ENCODE measurements at regions of chr5 and their contacts with region 1.

Region 1: GRCh38 chr5:83927140-83927733 is 206.6 kb upstream of the HAPLN1 start:
- DNase-seq: no peak
- H3K4me3 ChIP-seq: no peak overlapping the region
- CTCF ChIP-seq: peak; percentile 70

Region 2: DNA sequence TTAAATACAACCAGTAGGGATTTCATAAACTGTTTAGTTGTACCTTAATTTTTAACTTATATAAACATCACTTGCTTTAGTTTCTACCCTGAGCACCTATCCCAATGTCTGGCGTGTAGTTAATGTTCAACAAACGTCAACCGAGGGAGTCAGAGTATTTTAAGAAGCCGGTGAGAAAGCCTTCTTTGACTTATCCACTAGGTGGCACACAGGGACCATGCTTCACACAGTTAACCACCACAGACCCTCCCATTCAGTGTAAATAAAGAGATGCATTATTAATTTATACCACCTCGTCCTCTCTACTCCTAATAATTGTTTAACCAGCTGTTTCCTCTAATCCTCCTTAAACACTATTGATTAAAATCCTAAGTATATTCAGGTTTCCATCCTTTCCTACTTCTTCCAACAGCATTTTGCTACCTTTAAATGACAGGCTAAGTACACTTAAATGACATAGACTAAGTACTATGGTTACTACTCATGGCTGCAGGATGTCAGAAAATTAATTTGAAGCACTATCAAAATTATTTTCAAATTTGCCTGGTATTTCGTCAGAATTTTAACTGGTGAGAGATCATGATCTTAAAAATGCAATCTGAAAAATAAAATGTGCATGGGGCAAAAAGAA is 208.9 kb before region 1 on chr5:
- CTCF ChIA-PET with region 1: interaction called, 97 read pairs
- POLR2A ChIA-PET with region 1: interaction called, 31 read pairs
- DNase-seq: peak; percentile 21
- H3K4me3 ChIP-seq: no peak overlapping the region; the same call in 1 of the 2 replicates
- CTCF ChIP-seq: peak; percentile 62

Region 3: GRCh38 chr5:83914199-83914598 is 13.0 kb before region 1 on chr5:
- CTCF ChIA-PET with region 1: interaction called, 33 read pairs
- POLR2A ChIA-PET with region 1: interaction called, 5 read pairs
- DNase-seq: no peak
- H3K4me3 ChIP-seq: no peak overlapping the region
- CTCF ChIP-seq: no peak

Region 4: DNA sequence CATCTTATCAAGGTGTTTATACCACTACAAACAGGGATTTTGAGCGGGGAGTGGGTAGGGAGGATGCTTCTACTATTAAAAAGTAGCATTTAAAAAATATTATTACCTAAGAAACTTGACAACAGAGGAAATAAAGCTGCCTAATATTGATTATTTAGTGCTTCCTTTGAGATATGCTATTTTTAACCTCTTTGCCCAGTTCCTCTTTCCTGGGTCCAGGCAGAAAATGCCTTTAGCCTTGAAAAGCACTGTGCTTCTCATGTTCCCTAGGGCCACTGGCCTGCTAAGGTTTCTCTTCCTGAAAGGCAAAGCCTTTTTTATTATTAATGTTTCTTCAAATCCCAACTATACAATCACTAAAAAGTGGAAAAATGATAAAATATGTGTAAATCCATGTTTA is 10.6 kb after region 1 on chr5:
- CTCF ChIA-PET with region 1: interaction called, 16 read pairs
- POLR2A ChIA-PET with region 1: no interaction called
- DNase-seq: no peak
- H3K4me3 ChIP-seq: no peak overlapping the region
- CTCF ChIP-seq: no peak

Region 5: DNA sequence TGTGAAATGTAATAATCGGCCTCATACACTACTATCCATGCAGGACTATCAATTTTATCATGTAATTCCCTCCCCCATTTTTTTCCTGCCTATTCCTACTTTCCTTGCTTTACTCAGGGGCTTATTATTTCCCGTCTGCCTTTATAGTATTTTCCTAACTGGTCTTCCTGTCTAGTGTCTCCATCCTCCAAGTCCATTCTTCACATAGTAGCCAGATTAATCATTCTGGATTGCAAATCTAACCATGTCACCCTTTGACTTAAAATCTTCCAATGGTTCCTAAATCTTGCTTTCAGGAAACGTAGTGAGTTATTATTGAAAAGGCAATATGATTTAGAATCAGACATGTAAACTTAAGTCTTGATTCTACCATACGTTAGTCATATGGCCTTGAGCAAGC is 100.9 kb after region 1 on chr5:
- CTCF ChIA-PET with region 1: interaction called, 12 read pairs
- POLR2A ChIA-PET with region 1: no interaction called
- DNase-seq: no peak
- H3K4me3 ChIP-seq: no peak overlapping the region
- CTCF ChIP-seq: no peak

Region 6: GRCh38 chr5:84255315-84255714 is 328.1 kb after region 1 on chr5:
- CTCF ChIA-PET with region 1: interaction called, 23 read pairs
- POLR2A ChIA-PET with region 1: no interaction called
- DNase-seq: no peak
- H3K4me3 ChIP-seq: no peak overlapping the region
- CTCF ChIP-seq: peak; percentile 26

Region 7: DNA sequence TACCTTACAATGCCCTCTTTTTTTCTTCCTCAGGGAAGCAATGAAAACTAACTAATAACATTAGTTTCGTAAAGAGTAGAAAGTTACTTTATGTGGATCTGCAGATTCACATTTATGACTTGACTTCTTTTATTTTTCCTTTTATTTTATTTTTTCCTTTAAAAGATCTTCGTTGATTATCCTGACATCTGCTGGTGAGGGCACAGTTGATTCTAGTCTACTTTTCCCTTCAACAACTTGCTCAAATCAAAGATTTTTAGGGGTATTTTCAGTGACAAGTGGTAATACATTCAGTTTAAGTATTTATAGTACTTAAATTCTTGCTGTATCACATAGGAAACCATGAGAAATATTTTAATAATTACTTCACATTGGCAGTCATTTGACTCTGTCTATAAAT is 452.5 kb after region 1 on chr5:
- CTCF ChIA-PET with region 1: interaction called, 33 read pairs
- POLR2A ChIA-PET with region 1: interaction called, 4 read pairs
- DNase-seq: no peak
- H3K4me3 ChIP-seq: no peak overlapping the region
- CTCF ChIP-seq: peak; percentile 29